K562 (cell line): ENCODE measurements at regions of chr7 and their contacts with region 1.

Region 1: GRCh38 chr7:113159746-113160339 is 41.5 kb upstream of the SMIM30 start:
- DNase-seq: peak; percentile 57 to 75 (median 66)
- ATAC-seq: peak; percentile 94
- H3K4me3 ChIP-seq: no peak overlapping the region
- H3K27ac ChIP-seq: no peak overlapping the region
- H3K4me1 ChIP-seq: no peaks in the 10 kb centered on the region
- H3K27me3 ChIP-seq: no peaks in the 10 kb centered on the region
- CTCF ChIP-seq: peak; percentile 71 to 87 (median 80)
- EP300 ChIP-seq: no peak
- POLR2A ChIP-seq: no peak
- RAD21 ChIP-seq: peak; percentile 64 to 68

Region 2: GRCh38 chr7:113128028-113128427 is 31.8 kb before region 1 on chr7:
- CTCF ChIA-PET with region 1: no interaction called
- POLR2A ChIA-PET with region 1: no interaction called
- in situ Hi-C with region 1: no loop called
- intact Hi-C with region 1: no loop called
- DNase-seq: no peak
- ATAC-seq: no peak
- H3K4me3 ChIP-seq: no peak overlapping the region
- H3K27ac ChIP-seq: no peak overlapping the region
- H3K4me1 ChIP-seq: peaks cover 0 to 7% of the 10 kb centered on the region in 2 experiments; a peak in 1 of 5 replicates
- H3K27me3 ChIP-seq: no peaks in the 10 kb centered on the region
- CTCF ChIP-seq: no peak
- EP300 ChIP-seq: no peak
- POLR2A ChIP-seq: no peak
- RAD21 ChIP-seq: no peak

Region 3: GRCh38 chr7:113289140-113289740 is 129.4 kb after region 1 on chr7:
- CTCF ChIA-PET with region 1: interaction called, 8 read pairs
- POLR2A ChIA-PET with region 1: no interaction called
- in situ Hi-C with region 1: no loop called
- intact Hi-C with region 1: loop called (anchors 1 kb)
- DNase-seq: peak in 2 of 4 experiments; percentile 21 to 62
- ATAC-seq: peak; percentile 96
- H3K4me3 ChIP-seq: no peak overlapping the region
- H3K27ac ChIP-seq: no peak overlapping the region
- H3K4me1 ChIP-seq: peaks cover 0 to 6% of the 10 kb centered on the region in 2 experiments; a peak in 1 of 5 replicates
- H3K27me3 ChIP-seq: no peaks in the 10 kb centered on the region; a peak in 1 of 5 replicates
- CTCF ChIP-seq: peak; percentile 74 to 89 (median 75)
- EP300 ChIP-seq: no peak
- POLR2A ChIP-seq: no peak
- RAD21 ChIP-seq: peak; percentile 84 to 86

Region 4: DNA sequence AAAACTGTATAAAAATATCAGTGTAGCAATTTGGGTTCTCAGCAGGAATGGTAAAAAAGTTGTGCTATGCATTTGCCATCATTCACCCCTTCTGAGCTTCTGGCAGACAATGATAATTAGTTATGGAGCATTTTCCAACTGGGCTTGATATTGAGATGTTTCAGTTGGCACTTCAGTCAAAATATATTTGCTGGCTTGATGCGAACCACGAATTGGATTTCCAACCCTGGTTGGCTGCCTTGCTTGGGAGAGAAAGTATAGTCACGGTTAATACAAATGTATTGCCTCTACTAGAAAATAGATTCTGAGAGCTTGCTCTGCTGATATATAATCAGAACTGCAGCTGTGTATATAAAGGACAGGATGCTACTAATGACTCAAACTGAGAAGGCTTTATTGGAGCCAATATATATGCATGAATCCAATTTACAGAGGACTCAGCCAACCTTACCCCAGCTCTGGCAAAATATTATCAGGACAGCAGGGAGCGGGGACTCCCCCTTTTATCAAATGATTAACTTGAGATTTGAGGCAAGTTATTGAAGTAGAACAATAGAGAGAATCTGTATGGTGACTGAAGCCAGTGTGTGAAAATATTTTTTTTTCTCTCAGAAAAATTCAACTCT is 178.3 kb after region 1 on chr7:
- CTCF ChIA-PET with region 1: no interaction called
- POLR2A ChIA-PET with region 1: no interaction called
- in situ Hi-C with region 1: no loop called
- intact Hi-C with region 1: no loop called
- DNase-seq: no peak
- ATAC-seq: no peak
- H3K4me3 ChIP-seq: no peak overlapping the region
- H3K27ac ChIP-seq: no peak overlapping the region
- H3K4me1 ChIP-seq: no peaks in the 10 kb centered on the region
- H3K27me3 ChIP-seq: no peaks in the 10 kb centered on the region
- CTCF ChIP-seq: no peak
- EP300 ChIP-seq: no peak
- POLR2A ChIP-seq: no peak
- RAD21 ChIP-seq: no peak

Region 5: DNA sequence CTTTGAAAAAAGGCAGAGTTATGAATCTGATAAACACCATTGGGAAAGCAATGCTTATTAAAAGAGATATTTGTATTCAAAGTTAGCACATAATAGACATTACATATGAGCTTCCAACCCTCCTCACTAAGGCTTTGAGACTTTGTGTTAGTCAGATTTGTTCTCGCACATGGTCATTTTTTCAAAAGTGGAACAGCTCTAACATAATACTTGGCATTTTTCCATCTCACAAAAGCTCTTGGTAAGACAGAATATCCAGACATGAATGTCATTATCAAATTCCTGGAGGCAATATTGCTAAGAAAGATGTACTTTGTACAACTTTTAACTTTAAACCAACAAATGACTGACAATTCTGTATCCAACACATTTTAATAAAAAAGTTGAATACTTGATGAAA is 251.0 kb after region 1 on chr7:
- CTCF ChIA-PET with region 1: no interaction called
- POLR2A ChIA-PET with region 1: no interaction called
- in situ Hi-C with region 1: no loop called
- intact Hi-C with region 1: no loop called
- DNase-seq: no peak
- ATAC-seq: no peak
- H3K4me3 ChIP-seq: no peak overlapping the region
- H3K27ac ChIP-seq: no peak overlapping the region
- H3K4me1 ChIP-seq: no peaks in the 10 kb centered on the region
- H3K27me3 ChIP-seq: no peaks in the 10 kb centered on the region
- CTCF ChIP-seq: no peak
- EP300 ChIP-seq: no peak
- POLR2A ChIP-seq: no peak
- RAD21 ChIP-seq: no peak

Region 6: DNA sequence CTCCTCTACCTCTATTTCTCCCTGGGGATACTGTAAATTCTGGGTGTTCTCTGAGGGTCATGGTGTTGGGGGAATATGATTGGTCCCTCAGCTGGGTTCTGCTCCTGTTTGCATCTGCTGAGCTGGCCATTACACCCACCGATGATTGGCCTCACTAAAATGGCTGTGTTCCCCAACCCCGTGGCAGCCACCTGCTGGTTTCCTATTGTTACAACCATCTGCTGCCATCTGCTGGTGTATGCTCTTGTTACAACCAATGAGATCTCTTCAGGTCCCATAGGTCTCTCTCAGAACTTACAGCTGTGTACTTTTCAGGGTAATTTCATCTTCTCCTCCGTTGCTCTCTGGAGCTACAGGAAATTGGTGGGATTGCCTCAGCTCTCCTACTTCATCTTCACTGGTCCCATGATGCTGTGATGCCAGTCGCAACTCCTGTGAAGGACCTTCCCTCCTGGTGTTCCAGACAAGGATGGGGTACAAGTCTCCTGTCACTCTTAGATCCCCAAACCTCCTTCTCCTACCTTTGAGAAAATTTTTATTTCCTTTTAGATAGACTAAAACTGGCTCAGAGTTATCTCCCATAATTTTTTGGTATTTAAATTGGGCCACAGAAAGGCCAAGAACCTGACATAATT is 262.0 kb after region 1 on chr7:
- CTCF ChIA-PET with region 1: interaction called, 7 read pairs
- POLR2A ChIA-PET with region 1: interaction called, 5 read pairs
- in situ Hi-C with region 1: no loop called
- intact Hi-C with region 1: loop called (anchors 1 kb)
- DNase-seq: peak; percentile 78 to 93 (median 80)
- ATAC-seq: peak; percentile 100
- H3K4me3 ChIP-seq: no peak overlapping the region
- H3K27ac ChIP-seq: no peak overlapping the region
- H3K4me1 ChIP-seq: no peaks in the 10 kb centered on the region
- H3K27me3 ChIP-seq: no peaks in the 10 kb centered on the region
- CTCF ChIP-seq: peak; percentile 95 to 99 (median 99)
- EP300 ChIP-seq: no peak
- POLR2A ChIP-seq: no peak
- RAD21 ChIP-seq: peak; percentile 94 to 95

Region 7: GRCh38 chr7:113548137-113548536 is 388.3 kb after region 1 on chr7:
- CTCF ChIA-PET with region 1: no interaction called
- POLR2A ChIA-PET with region 1: no interaction called
- in situ Hi-C with region 1: no loop called
- intact Hi-C with region 1: no loop called
- DNase-seq: no peak
- ATAC-seq: no peak
- H3K4me3 ChIP-seq: no peak overlapping the region
- H3K27ac ChIP-seq: no peak overlapping the region
- H3K4me1 ChIP-seq: no peaks in the 10 kb centered on the region
- H3K27me3 ChIP-seq: no peaks in the 10 kb centered on the region
- CTCF ChIP-seq: no peak
- EP300 ChIP-seq: no peak
- POLR2A ChIP-seq: no peak
- RAD21 ChIP-seq: no peak

Region 8: DNA sequence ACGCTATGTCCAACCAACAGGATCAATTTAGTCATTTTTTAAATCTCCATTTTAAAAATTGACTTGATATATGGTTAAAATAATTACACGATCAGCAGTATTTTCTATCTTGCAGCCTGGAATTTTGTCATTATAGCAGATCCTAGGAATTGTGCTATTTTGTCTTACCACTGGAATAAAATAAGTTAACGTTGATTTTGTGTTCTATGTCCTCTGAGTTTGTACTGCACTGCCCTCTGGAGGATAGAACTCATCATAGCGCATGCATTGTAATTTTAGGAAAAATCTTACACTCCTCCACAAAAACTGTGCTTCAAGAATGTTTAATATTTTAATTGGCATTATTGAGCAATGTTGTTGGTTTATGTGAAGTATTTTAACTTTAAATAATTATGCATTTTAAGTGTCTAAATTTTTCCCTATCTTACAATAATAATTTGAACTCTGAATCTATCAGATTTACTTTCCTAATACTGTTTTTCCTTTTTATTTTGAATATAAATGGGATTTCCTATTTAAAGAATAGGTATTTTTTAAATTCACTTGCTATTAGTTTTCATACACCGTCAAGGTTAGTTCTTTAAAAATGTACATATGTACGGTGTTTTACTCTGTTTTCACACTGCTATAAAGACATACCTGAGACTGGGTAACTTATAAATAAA is 538.8 kb after region 1 on chr7:
- CTCF ChIA-PET with region 1: no interaction called
- POLR2A ChIA-PET with region 1: no interaction called
- in situ Hi-C with region 1: no loop called
- intact Hi-C with region 1: loop called (anchors 10 kb)
- DNase-seq: peak; percentile 9 to 40 (median 20)
- ATAC-seq: no peak
- H3K4me3 ChIP-seq: no peak overlapping the region
- H3K27ac ChIP-seq: no peak overlapping the region
- H3K4me1 ChIP-seq: no peaks in the 10 kb centered on the region
- H3K27me3 ChIP-seq: no peaks in the 10 kb centered on the region
- CTCF ChIP-seq: peak; percentile 32 to 69 (median 60); a peak in 5 of 6 replicates
- EP300 ChIP-seq: no peak
- POLR2A ChIP-seq: no peak
- RAD21 ChIP-seq: peak; percentile 69 to 82